Activated CD4-positive, alpha-beta memory T cell treated with anti-CD3 and anti-CD28 coated beads, Interleukin-2, amount 10 ng/mL, durations not matched to agents 7 days and 5 days (primary cell): ENCODE measurements at regions of chr1 and their contacts with region 1.

Region 1: GRCh38 chr1:53393325-53393792 is 65.5 kb upstream of the LRP8 start:
- DNase-seq: peak; percentile 71
- H3K4me3 Mint-ChIP-seq: no peak overlapping the region
- H3K27ac Mint-ChIP-seq: no peak overlapping the region
- H3K4me1 Mint-ChIP-seq: peaks cover 5% of the 10 kb centered on the region
- H3K27me3 Mint-ChIP-seq: peaks cover 2% of the 10 kb centered on the region

Region 2: GRCh38 chr1:52542085-52542688 is 851.2 kb before region 1 on chr1:
- CTCF ChIA-PET with region 1: no interaction called
- POLR2A ChIA-PET with region 1: no interaction called
- DNase-seq: no peak
- H3K4me3 Mint-ChIP-seq: no peak overlapping the region
- H3K27ac Mint-ChIP-seq: no peak overlapping the region
- H3K4me1 Mint-ChIP-seq: no peaks in the 10 kb centered on the region
- H3K27me3 Mint-ChIP-seq: no peaks in the 10 kb centered on the region

Region 3: GRCh38 chr1:53278201-53278725 is 115.1 kb before region 1 on chr1:
- CTCF ChIA-PET with region 1: interaction called, 98 read pairs
- POLR2A ChIA-PET with region 1: interaction called, 8 read pairs
- DNase-seq: peak; percentile 75
- H3K4me3 Mint-ChIP-seq: no peak overlapping the region
- H3K27ac Mint-ChIP-seq: peak overlapping the region; percentile 48
- H3K4me1 Mint-ChIP-seq: no peaks in the 10 kb centered on the region
- H3K27me3 Mint-ChIP-seq: no peaks in the 10 kb centered on the region

Region 4: DNA sequence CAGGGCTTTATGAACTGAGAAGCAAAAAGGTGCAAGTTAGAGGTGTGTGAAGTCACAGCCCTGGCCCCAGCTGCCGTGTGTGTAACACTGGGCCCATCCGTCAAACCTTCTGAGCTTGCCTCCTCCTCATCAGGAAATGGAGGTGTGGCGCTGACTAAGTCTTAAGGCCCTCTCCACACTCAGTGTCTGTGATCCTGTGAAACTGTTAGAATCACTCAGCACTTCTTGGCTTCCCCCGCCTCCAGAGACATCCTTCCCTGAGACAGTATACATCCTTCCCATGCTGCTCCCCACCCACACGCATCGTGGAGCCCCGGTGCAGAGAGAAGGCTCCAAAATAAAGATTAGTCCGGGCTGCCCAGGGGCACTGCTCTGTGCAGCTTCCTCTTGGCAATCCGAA is 98.8 kb before region 1 on chr1:
- CTCF ChIA-PET with region 1: interaction called, 24 read pairs
- POLR2A ChIA-PET with region 1: no interaction called
- DNase-seq: peak; percentile 64
- H3K4me3 Mint-ChIP-seq: no peak overlapping the region
- H3K27ac Mint-ChIP-seq: peak overlapping the region; percentile 90
- H3K4me1 Mint-ChIP-seq: peaks cover 55% of the 10 kb centered on the region
- H3K27me3 Mint-ChIP-seq: no peaks in the 10 kb centered on the region

Region 5: GRCh38 chr1:53367503-53368304 is 25.7 kb before region 1 on chr1:
- CTCF ChIA-PET with region 1: interaction called, 12 read pairs
- POLR2A ChIA-PET with region 1: no interaction called
- DNase-seq: peak; percentile 69
- H3K4me3 Mint-ChIP-seq: peak overlapping the region; percentile 72
- H3K27ac Mint-ChIP-seq: peak overlapping the region; percentile 75
- H3K4me1 Mint-ChIP-seq: peaks cover 20% of the 10 kb centered on the region
- H3K27me3 Mint-ChIP-seq: no peaks in the 10 kb centered on the region

Region 6: GRCh38 chr1:53413175-53414001 is 20.0 kb after region 1 on chr1:
- CTCF ChIA-PET with region 1: interaction called, 21 read pairs
- POLR2A ChIA-PET with region 1: interaction called, 3 read pairs
- DNase-seq: peak; percentile 78
- H3K4me3 Mint-ChIP-seq: peak overlapping the region; percentile 21
- H3K27ac Mint-ChIP-seq: peak overlapping the region; percentile 99
- H3K4me1 Mint-ChIP-seq: peaks cover 54% of the 10 kb centered on the region
- H3K27me3 Mint-ChIP-seq: no peaks in the 10 kb centered on the region

Region 7: DNA sequence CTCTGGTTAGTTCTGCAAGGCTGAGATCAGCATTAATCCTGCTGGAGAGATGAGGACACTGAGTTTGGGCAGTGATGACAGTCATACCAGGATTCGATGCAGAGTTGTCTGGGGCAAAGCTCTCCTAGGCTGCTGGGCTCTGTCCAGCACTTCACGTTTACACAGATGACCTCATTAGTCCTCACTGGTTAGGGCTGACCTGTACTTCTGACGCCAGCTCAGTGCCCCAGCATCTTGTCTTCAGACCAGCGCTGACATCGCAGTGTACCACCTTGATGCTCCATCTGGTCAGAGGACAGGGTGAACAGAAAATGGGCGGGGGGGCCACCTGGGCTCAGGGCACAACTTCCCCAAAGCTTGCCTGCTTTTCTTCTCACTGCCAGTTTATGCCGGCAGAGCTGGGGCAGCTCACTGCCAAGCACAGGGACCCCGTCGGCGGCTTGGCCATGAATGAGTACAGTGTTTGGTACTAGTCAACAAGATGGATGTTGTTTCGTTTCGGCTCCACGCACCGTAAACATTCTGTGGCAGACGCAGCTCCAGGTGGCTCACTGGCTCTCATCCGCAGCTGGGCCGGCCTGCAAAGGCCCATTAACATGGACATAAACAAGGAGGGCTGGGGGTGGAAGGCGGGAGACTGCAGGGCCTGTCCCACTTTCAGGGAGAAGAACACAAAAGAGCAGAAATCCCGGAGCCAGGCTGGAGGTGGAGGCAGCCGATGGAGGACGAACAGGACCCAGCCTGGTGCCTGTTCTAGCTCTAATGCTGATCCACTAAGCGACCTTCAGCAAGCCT is 226.9 kb after region 1 on chr1:
- CTCF ChIA-PET with region 1: no interaction called
- POLR2A ChIA-PET with region 1: no interaction called
- DNase-seq: no peak
- H3K4me3 Mint-ChIP-seq: no peak overlapping the region
- H3K27ac Mint-ChIP-seq: no peak overlapping the region
- H3K4me1 Mint-ChIP-seq: no peaks in the 10 kb centered on the region
- H3K27me3 Mint-ChIP-seq: peaks cover 5% of the 10 kb centered on the region

Region 8: DNA sequence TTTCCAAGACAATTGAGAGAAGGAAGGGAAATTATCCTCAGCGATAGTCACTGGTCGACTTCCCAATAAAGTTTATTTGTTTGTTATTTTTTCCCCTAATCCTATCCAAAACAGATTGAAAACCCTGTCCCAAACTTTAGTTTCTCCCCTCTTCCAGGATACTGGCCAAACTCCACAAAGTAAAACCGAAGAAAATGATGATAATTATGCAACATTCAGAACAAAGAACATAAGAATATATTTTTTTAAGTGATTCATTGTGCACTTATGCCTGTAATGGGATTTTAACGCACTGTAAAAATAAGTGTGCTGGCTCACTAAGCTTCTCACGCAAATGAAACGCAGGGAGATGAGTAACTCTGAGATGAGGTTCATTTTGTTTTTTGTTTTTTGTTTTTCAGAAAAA is 339.6 kb after region 1 on chr1:
- CTCF ChIA-PET with region 1: no interaction called
- POLR2A ChIA-PET with region 1: no interaction called
- DNase-seq: no peak
- H3K4me3 Mint-ChIP-seq: no peak overlapping the region
- H3K27ac Mint-ChIP-seq: no peak overlapping the region
- H3K4me1 Mint-ChIP-seq: peaks cover 2% of the 10 kb centered on the region
- H3K27me3 Mint-ChIP-seq: peaks cover 58% of the 10 kb centered on the region